ENCODE measurements at regions of chr16 and their contacts with region 1.

Region 1: DNA sequence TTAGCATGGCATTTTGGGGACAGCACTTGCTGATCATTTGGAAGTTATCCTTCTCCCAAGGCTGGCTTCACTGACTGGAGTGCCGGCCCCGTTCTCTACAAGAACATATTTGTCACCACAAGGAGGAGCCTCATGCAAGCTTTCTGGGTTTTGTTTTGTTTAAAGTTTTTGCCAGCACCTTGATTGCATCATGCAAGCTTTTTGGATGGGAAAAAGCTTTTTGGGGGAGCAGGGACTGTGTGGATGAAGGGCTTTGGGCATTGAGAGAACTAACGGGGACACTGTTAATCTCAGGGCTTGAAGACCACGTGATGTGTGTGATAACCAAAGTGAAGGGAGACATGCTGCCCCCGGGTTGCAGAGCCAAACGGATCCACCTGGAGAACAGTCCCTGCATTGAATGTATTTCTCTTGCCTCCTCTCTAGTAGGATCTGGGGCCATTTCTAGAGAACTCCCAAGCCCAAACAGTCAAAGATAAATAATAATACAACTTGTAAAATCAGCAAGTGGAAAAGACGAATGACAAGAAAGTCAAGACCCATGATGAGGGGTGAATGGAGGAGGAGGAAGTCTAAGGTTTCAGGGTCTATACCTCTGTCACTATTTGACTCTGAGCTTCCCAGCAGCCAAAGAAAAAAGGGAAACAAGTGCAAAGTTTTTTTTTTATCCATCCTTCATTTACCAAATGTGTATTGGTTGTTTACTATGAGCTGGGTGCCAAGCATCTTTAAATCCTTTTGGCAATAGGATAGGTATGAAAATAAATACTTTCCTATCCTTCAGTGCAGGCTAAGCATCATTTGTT is 17.2 kb downstream of the TMEM114 start:
- DNase-seq: peak in 2 of 3 donors; percentile 31 to 34
- H3K4me3 ChIP-seq: no peak overlapping the region
- H3K4me3 Mint-ChIP-seq: peak overlapping the region in 1 of 2 donors; percentile 12
- H3K27ac ChIP-seq: no peak overlapping the region
- H3K27ac Mint-ChIP-seq: no peak overlapping the region
- H3K4me1 ChIP-seq: no peaks in the 10 kb centered on the region
- H3K4me1 Mint-ChIP-seq: peaks cover 14% of the 10 kb centered on the region
- H3K27me3 ChIP-seq: peaks cover 0 to 2% of the 10 kb centered on the region in 2 donors
- H3K27me3 Mint-ChIP-seq: peaks cover 7 to 33% (median 15%) of the 10 kb centered on the region in 3 donors
- CTCF ChIP-seq: peak; percentile 74

Region 2: DNA sequence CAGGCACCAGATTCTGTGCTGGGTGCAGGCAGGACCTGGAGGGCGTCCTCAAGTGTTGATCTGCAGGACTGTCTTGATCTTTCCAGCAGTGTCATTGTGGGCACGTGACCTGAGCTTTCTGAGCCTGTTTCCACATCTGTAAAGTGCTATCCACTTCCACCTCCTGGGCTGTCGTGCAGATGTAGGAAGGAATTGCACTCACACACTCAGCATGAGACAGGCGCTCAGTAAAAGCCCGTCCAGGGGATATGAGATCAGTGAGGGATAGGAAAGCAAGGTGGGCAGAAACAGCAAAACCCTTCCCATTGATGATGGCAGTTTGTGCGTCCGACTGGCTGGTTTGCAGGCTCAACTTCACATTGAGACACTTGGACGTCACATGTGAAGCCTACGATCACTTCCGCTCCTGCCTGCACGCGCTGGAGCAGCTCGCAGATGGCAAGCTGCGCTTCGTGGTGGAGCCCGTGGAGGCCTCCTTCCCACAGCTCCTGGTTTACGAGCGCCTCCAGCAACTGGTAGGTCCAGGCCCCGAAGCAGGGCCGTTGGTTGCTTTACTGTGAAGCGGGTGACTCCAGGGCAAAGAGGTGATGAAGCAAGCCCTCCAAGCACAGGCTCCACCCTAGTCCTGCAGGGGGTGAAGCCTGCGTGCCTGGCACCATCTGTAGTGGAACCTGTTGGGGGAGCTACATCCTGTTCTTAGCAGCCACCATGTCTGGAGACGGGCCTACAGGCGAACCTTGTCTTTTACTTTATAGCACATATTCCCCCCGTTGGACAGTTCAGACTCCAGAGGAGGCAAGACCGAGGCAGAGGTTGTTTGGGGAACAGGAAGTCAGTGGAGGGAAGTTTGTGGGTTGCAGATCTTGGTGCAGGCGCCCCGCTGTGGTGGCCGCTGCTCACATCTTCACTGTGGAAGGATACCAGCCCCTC is 71.4 kb after region 1 on chr16:
- intact Hi-C with region 1: loop called (anchors 5 kb)
- DNase-seq: peak; percentile 81 to 86 (median 84)
- H3K4me3 ChIP-seq: peak overlapping the region; percentile 35 to 62 (median 35)
- H3K4me3 Mint-ChIP-seq: peak overlapping the region; percentile 75 to 94
- H3K27ac ChIP-seq: peak overlapping the region; percentile 93 to 95
- H3K27ac Mint-ChIP-seq: peak overlapping the region; percentile 96 to 98 (median 98)
- H3K4me1 ChIP-seq: peaks cover 28% of the 10 kb centered on the region in 2 donors
- H3K4me1 Mint-ChIP-seq: peaks cover 37% of the 10 kb centered on the region
- H3K27me3 ChIP-seq: no peaks in the 10 kb centered on the region
- H3K27me3 Mint-ChIP-seq: peaks cover 0 to 2% (median 0%) of the 10 kb centered on the region in 3 donors
- CTCF ChIP-seq: peak; percentile 68

Region 3: GRCh38 chr16:8665529-8665928 is 92.4 kb after region 1 on chr16:
- intact Hi-C with region 1: no loop called
- DNase-seq: no peak
- H3K4me3 ChIP-seq: no peak overlapping the region
- H3K4me3 Mint-ChIP-seq: no peak overlapping the region
- H3K27ac ChIP-seq: no peak overlapping the region
- H3K27ac Mint-ChIP-seq: peak overlapping the region in 1 of 7 donors; percentile 63
- H3K4me1 ChIP-seq: no peaks in the 10 kb centered on the region
- H3K4me1 Mint-ChIP-seq: no peaks in the 10 kb centered on the region
- H3K27me3 ChIP-seq: no peaks in the 10 kb centered on the region
- H3K27me3 Mint-ChIP-seq: no peaks in the 10 kb centered on the region
- CTCF ChIP-seq: no peak

Region 4: GRCh38 chr16:8751481-8752311 is 178.6 kb after region 1 on chr16:
- intact Hi-C with region 1: no loop called
- DNase-seq: peak in 1 of 3 donors; percentile 23
- H3K4me3 ChIP-seq: no peak overlapping the region
- H3K4me3 Mint-ChIP-seq: no peak overlapping the region
- H3K27ac ChIP-seq: no peak overlapping the region
- H3K27ac Mint-ChIP-seq: peak overlapping the region in 1 of 7 donors; percentile 33
- H3K4me1 ChIP-seq: peaks cover 0 to 8% of the 10 kb centered on the region in 2 donors
- H3K4me1 Mint-ChIP-seq: peaks cover 6% of the 10 kb centered on the region
- H3K27me3 ChIP-seq: no peaks in the 10 kb centered on the region
- H3K27me3 Mint-ChIP-seq: peaks cover 0 to 1% (median 1%) of the 10 kb centered on the region in 3 donors
- CTCF ChIP-seq: no peak

Measured in CD14-positive monocyte (primary cell).